A673 (cell line): ENCODE measurements at regions of chr17 and their contacts with region 1.

Region 1: GRCh38 chr17:63827002-63827771 is at the starts of genes FTSJ3 and PSMC5:
- DNase-seq: peak; percentile 97
- H3K4me3 ChIP-seq: peak within 1 kb of the TSS; percentile 85
- H3K27ac ChIP-seq: peak within 1 kb of the TSS; percentile 98
- H3K4me1 ChIP-seq: peaks cover 12% of the 10 kb centered on the region
- H3K27me3 ChIP-seq: no peaks in the 10 kb centered on the region
- CTCF ChIP-seq: peak; percentile 68
- total RNA-seq, gene FTSJ3: 81.0 and 90.4 TPM in 2 replicates
- total RNA-seq, gene PSMC5: 302 and 305 TPM in 2 replicates

Region 2: DNA sequence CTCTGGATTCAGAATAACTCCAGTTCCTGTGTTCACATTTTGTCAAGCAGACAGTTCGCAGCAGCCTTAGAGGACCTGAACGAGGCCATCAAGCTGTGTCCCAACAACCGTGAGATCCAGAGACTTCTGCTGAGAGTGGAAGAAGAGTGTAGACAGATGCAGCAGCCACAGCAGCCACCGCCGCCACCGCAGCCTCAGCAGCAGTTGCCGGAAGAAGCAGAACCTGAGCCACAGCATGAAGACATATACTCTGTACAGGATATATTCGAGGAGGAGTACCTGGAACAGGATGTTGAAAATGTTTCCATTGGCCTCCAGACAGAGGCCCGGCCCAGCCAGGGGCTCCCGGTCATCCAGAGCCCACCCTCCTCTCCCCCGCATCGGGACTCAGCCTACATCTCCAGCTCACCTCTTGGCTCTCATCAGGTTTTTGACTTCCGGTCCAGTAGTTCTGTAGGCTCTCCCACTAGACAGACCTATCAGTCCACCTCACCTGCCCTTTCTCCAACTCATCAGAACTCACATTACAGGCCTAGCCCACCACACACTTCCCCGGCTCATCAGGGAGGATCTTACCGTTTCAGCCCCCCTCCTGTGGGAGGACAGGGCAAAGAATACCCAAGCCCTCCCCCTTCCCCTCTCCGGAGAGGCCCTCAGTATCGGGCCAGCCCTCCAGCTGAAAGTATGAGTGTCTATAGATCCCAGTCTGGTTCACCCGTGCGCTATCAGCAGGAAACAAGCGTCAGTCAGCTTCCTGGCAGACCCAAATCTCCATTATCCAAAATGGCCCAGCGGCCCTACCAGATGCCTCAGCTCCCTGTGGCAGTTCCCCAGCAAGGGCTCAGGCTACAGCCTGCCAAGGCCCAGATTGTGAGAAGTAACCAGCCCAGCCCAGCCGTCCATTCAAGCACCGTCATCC is 407.0 kb before region 1 on chr17:
- CTCF ChIA-PET with region 1: no interaction called
- POLR2A ChIA-PET with region 1: no interaction called
- intact Hi-C with region 1: no loop called
- DNase-seq: no peak
- H3K4me3 ChIP-seq: no peak overlapping the region
- H3K27ac ChIP-seq: no peak overlapping the region
- H3K4me1 ChIP-seq: no peaks in the 10 kb centered on the region
- H3K27me3 ChIP-seq: no peaks in the 10 kb centered on the region
- CTCF ChIP-seq: no peak

Region 3: DNA sequence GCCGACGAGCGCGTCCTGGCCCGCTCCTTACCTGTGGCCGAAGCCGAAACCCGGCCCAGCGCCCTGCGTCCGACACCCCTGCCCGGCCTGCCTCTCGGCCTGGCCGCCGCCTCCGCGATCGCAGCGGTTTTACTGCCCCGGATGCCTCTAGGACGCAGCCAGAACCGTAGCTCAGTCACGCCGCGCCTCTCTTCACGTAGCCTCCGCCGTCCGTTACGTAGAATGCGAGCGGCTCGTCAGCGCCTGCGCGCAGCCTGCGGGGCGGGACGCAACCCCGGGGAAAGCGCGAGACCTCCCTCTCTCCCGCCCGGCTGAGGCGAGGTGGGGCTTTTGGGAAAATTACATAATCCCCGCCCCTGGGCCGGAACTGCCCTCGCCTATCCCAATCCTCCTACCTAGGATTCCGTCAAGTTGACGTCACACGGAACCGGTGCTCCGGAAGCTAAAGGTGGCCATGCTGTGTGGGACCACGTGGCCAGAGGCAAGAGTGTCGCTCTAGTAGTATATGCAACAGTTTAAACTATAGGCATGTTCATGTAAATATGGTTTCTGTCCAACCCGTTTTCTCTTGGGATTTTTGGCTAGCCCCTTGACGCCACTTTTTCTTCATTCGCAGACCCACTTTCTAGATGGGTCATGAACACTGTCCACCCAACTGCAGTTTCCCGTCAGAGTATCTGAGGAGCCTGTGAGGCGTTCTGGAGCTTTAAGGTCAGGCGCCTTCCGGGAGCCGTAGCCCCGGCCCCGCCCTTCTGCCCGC is 53.6 kb before region 1 on chr17 and contains the start of gene CCDC47:
- CTCF ChIA-PET with region 1: interaction called, 3 read pairs
- POLR2A ChIA-PET with region 1: no interaction called
- intact Hi-C with region 1: loop called (anchors 1 kb)
- DNase-seq: peak; percentile 100
- H3K4me3 ChIP-seq: peak within 1 kb of the TSS; percentile 70
- H3K27ac ChIP-seq: peak within 1 kb of the TSS; percentile 99
- H3K4me1 ChIP-seq: peaks cover 10% of the 10 kb centered on the region
- H3K27me3 ChIP-seq: no peaks in the 10 kb centered on the region
- CTCF ChIP-seq: no peak
- total RNA-seq, gene CCDC47: 91.9 and 104 TPM in 2 replicates

Region 4: DNA sequence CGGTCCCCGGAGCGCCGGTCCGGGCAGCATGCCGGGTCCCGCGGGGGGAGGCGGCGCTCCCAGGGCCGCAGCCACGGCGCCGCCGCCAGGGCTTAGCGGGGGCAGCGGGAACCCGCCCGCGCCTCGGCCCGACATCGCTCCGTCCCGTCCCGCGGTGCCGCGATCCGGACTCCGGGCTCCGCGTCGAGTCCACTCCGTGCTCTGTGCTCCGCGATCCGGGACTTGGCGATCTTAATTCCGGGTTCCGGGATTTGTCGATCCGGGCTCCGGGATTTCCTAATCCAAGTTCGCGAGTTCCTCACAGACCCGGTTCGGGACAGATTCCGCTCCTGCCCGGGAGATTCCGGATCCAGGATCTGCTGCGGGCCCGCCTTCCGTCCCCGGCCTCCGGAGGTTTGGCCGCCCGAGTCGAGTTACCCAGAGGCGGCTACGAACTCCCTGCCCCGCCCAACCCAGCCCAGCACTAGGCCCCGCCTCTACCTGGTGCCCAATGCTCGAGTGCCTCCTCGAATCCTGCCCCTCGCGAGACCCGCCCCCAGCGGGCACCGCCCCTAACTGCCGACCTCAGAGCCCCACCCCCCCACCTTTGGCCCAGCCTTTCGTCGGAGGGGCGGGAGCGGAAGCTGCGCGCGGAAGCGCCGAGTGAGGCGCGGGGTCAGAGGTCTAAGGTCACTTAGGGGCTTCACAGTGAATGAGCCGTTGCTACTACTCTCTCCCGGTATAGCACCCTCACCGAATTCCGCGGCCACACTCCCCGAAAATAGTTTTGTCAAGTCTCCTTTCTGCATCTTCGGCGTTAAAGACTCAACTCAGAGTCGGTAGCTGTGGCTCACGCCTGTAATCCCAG is 15.6 kb after region 1 on chr17 and contains the start of gene SMARCD2:
- CTCF ChIA-PET with region 1: interaction called, 5 read pairs
- POLR2A ChIA-PET with region 1: no interaction called
- intact Hi-C with region 1: loop called (anchors 1 kb)
- DNase-seq: peak; percentile 99
- H3K4me3 ChIP-seq: peak within 1 kb of the TSS; percentile 95
- H3K27ac ChIP-seq: peak within 1 kb of the TSS; percentile 92
- H3K4me1 ChIP-seq: peaks cover 36% of the 10 kb centered on the region
- H3K27me3 ChIP-seq: no peaks in the 10 kb centered on the region
- CTCF ChIP-seq: no peak
- total RNA-seq, gene SMARCD2: 71.9 and 89.4 TPM in 2 replicates